IMR-90 (cell line): ENCODE measurements at regions of chr5 and their contacts with region 1.

Region 1: GRCh38 chr5:159915904-159916840 is at the start of gene ADRA1B:
- DNase-seq: peak; percentile 53
- ATAC-seq: peak; percentile 90
- H3K4me3 ChIP-seq: peak within 1 kb of the TSS; percentile 40
- H3K27ac ChIP-seq: no peak within 1 kb of the TSS; the same call in 1 of the 2 replicates
- H3K4me1 ChIP-seq: peaks cover 16% of the 10 kb centered on the region
- H3K27me3 ChIP-seq: no peaks in the 10 kb centered on the region
- CTCF ChIP-seq: peak; percentile 83
- POLR2A ChIP-seq: 0 out of 2 replicates have a peak, but pooled peaks have one; percentile 22
- RAD21 ChIP-seq: peak; percentile 91
- total RNA-seq, gene ADRA1B: 0.18 and 0.56 TPM in 2 replicates

Region 2: GRCh38 chr5:159331093-159331973 is 584.8 kb before region 1 on chr5:
- CTCF ChIA-PET with region 1: no interaction called
- POLR2A ChIA-PET with region 1: no interaction called
- dilution Hi-C with region 1: no loop called
- in situ Hi-C with region 1: no loop called
- intact Hi-C with region 1: loop called (anchors 5 kb)
- DNase-seq: peak; percentile 19
- ATAC-seq: peak; percentile 68
- H3K4me3 ChIP-seq: peak overlapping the region; percentile 39
- H3K27ac ChIP-seq: no peak overlapping the region; the same call in 1 of the 2 replicates
- H3K4me1 ChIP-seq: peaks cover 4% of the 10 kb centered on the region; the same call in 1 of the 2 replicates
- H3K27me3 ChIP-seq: no peaks in the 10 kb centered on the region
- CTCF ChIP-seq: peak; percentile 48
- POLR2A ChIP-seq: no peak
- RAD21 ChIP-seq: 0 out of 2 replicates have a peak, but pooled peaks have one; percentile 28

Region 3: DNA sequence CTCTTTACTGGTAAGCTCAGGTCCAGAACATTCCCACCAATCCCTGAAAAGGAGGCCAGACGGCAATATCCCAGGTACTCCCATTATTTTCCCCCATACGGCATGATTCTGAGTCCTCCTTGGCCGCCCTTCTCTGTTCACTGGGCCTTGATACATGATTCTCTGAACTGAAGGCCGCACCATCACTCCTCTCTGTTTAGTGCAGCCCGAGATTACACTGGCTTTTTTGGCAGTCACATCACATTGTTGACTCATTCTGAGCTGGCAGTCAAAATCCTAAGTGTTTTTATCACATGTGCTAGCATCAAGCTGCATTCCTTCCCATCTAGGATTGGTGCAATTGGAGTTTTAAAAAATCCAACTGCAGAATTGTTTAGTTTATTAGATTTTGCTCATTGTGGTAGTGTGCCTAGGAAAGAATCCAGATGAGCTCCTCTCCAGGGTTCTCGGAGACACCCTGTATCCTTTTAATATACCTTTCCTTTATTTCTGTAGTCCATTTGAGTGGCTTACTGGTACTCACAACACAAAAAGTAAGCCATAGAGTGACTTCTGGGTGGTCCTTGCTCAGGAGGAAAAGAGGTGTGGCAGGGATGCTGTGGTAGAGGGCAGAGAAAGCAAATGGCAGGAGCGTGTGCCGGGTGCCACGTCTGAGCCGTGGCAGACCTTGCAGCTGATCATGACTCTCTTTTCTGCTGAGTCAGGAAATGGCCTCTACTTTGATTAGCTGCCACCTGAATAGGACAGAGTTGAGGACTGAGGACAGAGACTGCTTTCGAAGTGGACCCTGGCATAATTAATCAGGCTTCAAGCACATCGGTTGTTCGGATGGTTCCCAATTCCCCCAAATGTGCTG is 464.7 kb before region 1 on chr5:
- CTCF ChIA-PET with region 1: interaction called, 6 read pairs
- POLR2A ChIA-PET with region 1: no interaction called
- dilution Hi-C with region 1: no loop called
- in situ Hi-C with region 1: loop called (anchors 5 kb)
- intact Hi-C with region 1: loop called (anchors 1 kb)
- DNase-seq: peak; percentile 98
- ATAC-seq: peak; percentile 94
- H3K4me3 ChIP-seq: no peak overlapping the region
- H3K27ac ChIP-seq: peak overlapping the region; percentile 71
- H3K4me1 ChIP-seq: peaks cover 16% of the 10 kb centered on the region
- H3K27me3 ChIP-seq: no peaks in the 10 kb centered on the region
- CTCF ChIP-seq: 0 out of 2 replicates have a peak, but pooled peaks have one; percentile 1
- POLR2A ChIP-seq: no peak
- RAD21 ChIP-seq: peak; percentile 29; the same call in 1 of the 2 replicates

Region 4: GRCh38 chr5:159581502-159582249 is 334.5 kb before region 1 on chr5:
- CTCF ChIA-PET with region 1: interaction called, 4 read pairs
- POLR2A ChIA-PET with region 1: no interaction called
- dilution Hi-C with region 1: no loop called
- in situ Hi-C with region 1: no loop called
- intact Hi-C with region 1: loop called (anchors 5 kb)
- DNase-seq: peak; percentile 45
- ATAC-seq: peak; percentile 53
- H3K4me3 ChIP-seq: no peak overlapping the region
- H3K27ac ChIP-seq: no peak overlapping the region
- H3K4me1 ChIP-seq: peaks cover 5% of the 10 kb centered on the region
- H3K27me3 ChIP-seq: peaks cover 4% of the 10 kb centered on the region
- CTCF ChIP-seq: 0 out of 2 replicates have a peak, but pooled peaks have one; percentile 22
- POLR2A ChIP-seq: no peak
- RAD21 ChIP-seq: no peak

Region 5: DNA sequence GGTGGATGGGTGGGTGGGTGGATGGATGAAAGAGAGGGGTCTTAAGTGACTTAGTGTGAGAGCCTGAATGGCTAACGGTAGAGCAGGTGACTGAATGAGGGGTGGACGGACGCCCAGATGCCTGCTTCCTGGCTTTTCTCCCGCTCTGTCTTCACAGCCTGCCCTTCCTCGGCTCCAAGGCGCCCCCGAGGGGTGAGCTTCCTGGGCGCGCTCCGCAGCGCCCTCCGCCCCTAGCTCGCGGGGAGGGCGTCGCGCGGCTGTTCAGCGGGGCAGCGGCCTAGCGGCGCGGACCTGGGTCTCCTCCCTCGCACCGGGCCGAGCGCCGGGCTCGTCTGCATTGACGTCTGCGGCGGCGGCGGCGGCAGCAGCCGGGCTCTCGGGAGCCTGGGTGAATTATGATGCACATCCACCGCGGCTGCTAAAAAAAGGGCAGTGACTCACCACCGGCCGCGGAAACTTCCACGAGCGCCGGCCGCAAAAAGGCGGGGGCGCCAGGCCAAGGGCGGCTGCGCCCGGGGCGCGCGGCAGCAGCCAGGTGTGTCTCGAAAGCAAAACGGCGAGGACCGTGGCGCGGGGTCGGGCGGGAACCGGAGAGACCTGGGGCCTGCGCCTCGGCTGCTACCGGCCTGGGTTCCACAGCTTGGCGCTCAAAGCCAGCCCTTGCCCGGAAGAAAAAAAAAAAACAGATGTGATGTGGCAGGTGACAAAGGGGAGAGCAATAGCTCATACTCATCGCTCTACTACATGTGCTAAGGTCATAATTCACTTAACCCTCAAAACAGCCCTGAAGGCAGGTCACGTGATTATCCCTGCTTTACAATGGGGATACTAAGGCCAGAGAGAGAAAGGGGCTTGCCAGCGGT is 142.9 kb before region 1 on chr5:
- CTCF ChIA-PET with region 1: no interaction called
- POLR2A ChIA-PET with region 1: no interaction called
- dilution Hi-C with region 1: no loop called
- in situ Hi-C with region 1: no loop called
- intact Hi-C with region 1: loop called (anchors 5 kb)
- DNase-seq: peak; percentile 90
- ATAC-seq: peak; percentile 97
- H3K4me3 ChIP-seq: peak overlapping the region; percentile 31
- H3K27ac ChIP-seq: peak overlapping the region; percentile 31; the same call in 1 of the 2 replicates
- H3K4me1 ChIP-seq: peaks cover 3% of the 10 kb centered on the region; the same call in 1 of the 2 replicates
- H3K27me3 ChIP-seq: no peaks in the 10 kb centered on the region
- CTCF ChIP-seq: peak; percentile 46
- POLR2A ChIP-seq: peak; percentile 69; the same call in 1 of the 2 replicates
- RAD21 ChIP-seq: peak; percentile 44

Region 6: DNA sequence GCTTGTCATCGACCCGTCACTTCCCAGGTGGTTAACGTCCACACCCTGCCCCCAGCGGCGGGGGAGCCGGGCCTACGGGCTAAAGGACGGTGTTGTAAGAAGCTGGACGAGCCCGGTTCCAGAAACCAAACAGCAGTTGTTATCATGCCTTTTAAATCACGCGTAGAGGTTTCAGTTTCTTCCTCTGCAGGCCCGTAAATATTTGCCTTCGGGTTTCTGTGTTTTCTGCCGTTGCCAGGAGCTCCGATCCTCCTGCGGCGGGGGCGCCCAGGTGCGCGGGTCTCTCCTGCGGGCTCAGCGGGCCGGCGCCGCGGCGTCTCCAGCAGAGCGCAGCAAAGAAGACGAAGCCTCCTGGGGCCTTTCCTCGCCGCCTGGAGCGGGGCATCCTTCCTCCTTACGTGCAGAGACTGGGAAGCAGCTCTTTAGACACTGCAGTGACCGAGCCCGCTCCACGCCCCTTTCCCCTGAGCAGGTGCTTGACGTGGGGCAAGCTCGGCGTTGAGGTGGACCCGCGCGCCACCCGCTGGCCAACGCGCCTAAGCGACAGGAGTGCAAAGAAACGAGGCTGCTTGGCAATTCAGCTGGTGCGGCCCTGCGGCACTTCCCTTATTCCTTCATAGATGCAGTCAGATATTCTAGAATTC is 71.0 kb after region 1 on chr5:
- CTCF ChIA-PET with region 1: interaction called, 6 read pairs
- POLR2A ChIA-PET with region 1: no interaction called
- dilution Hi-C with region 1: no loop called
- in situ Hi-C with region 1: no loop called
- intact Hi-C with region 1: loop called (anchors 5 kb)
- DNase-seq: peak; percentile 58
- ATAC-seq: peak; percentile 94
- H3K4me3 ChIP-seq: peak overlapping the region; percentile 39
- H3K27ac ChIP-seq: no peak overlapping the region
- H3K4me1 ChIP-seq: peaks cover 4% of the 10 kb centered on the region; the same call in 1 of the 2 replicates
- H3K27me3 ChIP-seq: peaks cover 4% of the 10 kb centered on the region
- CTCF ChIP-seq: peak; percentile 83
- POLR2A ChIP-seq: 0 out of 2 replicates have a peak, but pooled peaks have one; percentile 26
- RAD21 ChIP-seq: peak; percentile 87